SK-N-SH (cell line): ENCODE measurements at regions of chr21 and their contacts with region 1.

Region 1: DNA sequence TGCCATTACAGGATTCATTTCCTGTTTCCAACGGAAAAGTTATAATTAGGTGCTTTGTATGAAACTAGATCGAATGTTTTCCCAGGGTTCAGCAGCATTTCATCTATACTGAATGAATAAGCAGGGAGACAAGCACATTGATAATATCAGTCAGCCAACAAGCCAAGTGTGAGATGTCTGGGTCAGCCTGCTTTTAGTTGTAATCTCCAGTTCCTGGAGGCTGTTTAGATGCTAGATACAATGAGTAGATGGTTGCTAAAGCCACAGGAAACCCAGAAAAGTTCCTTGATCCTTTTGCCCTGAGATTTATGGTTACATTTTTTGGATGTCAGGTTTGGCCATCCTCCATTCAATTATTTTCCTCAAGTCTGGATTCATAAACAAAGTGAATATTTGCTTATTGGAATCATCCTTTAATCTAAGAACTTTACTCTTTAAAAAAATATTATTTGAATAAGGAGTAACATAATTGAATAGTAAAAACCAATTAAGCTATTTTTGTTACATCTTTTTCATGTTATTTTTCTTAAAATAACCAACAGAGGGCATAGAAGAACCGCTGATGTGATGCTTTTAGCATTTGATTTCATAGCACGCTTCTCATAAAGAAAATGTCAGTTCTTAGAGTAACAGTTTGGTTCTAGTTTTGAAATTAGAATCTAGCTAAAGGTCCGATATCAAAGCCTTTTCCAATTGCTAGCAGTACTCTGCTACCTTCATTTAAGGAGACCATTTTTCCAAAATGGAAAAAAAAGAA is 76.6 kb downstream of the HSPA13 start:
- DNase-seq: no peak
- H3K4me3 ChIP-seq: no peak overlapping the region
- H3K27ac ChIP-seq: no peak overlapping the region
- H3K4me1 ChIP-seq: no peaks in the 10 kb centered on the region; a peak in 1 of 4 replicates
- H3K27me3 ChIP-seq: no peaks in the 10 kb centered on the region
- CTCF ChIP-seq: peak; percentile 51
- EP300 ChIP-seq: no peak
- RAD21 ChIP-seq: peak; percentile 62

Region 2: GRCh38 chr21:14318578-14318977 is 12.2 kb after region 1 on chr21:
- CTCF ChIA-PET with region 1: interaction called, 14 read pairs
- POLR2A ChIA-PET with region 1: no interaction called
- DNase-seq: no peak
- H3K4me3 ChIP-seq: no peak overlapping the region
- H3K27ac ChIP-seq: no peak overlapping the region
- H3K4me1 ChIP-seq: no peaks in the 10 kb centered on the region
- H3K27me3 ChIP-seq: 0 out of 2 replicates have a peak, but pooled peaks cover 4% of the 10 kb centered on the region
- CTCF ChIP-seq: no peak
- EP300 ChIP-seq: no peak
- RAD21 ChIP-seq: no peak

Region 3: GRCh38 chr21:14581902-14582457 is 275.7 kb after region 1 on chr21:
- CTCF ChIA-PET with region 1: no interaction called
- POLR2A ChIA-PET with region 1: no interaction called
- DNase-seq: no peak
- H3K4me3 ChIP-seq: no peak overlapping the region
- H3K27ac ChIP-seq: no peak overlapping the region
- H3K4me1 ChIP-seq: no peaks in the 10 kb centered on the region
- H3K27me3 ChIP-seq: no peaks in the 10 kb centered on the region
- CTCF ChIP-seq: no peak
- EP300 ChIP-seq: no peak
- RAD21 ChIP-seq: no peak